A673 (cell line): ENCODE measurements at regions of chr4 and their contacts with region 1.

Region 1: GRCh38 chr4:41644288-41644914 is 104.1 kb downstream of the PHOX2B start:
- DNase-seq: peak; percentile 79
- H3K4me3 ChIP-seq: no peak overlapping the region
- H3K27ac ChIP-seq: no peak overlapping the region
- H3K4me1 ChIP-seq: peaks cover 6% of the 10 kb centered on the region
- H3K27me3 ChIP-seq: peaks cover 37% of the 10 kb centered on the region
- CTCF ChIP-seq: peak; percentile 96

Region 2: GRCh38 chr4:41981456-41981855 is 337.1 kb after region 1 on chr4 and contains the start of gene DCAF4L1:
- CTCF ChIA-PET with region 1: interaction called, 10 read pairs
- POLR2A ChIA-PET with region 1: no interaction called
- intact Hi-C with region 1: no loop called
- DNase-seq: no peak
- H3K4me3 ChIP-seq: no peak within 1 kb of the TSS
- H3K27ac ChIP-seq: no peak within 1 kb of the TSS
- H3K4me1 ChIP-seq: no peaks in the 10 kb centered on the region
- H3K27me3 ChIP-seq: no peaks in the 10 kb centered on the region
- CTCF ChIP-seq: no peak
- total RNA-seq, gene DCAF4L1: 0.26 and 0.41 TPM in 2 replicates